ENCODE measurements at regions of chr19 and their contacts with region 1.

Region 1: GRCh38 chr19:52237771-52238400 is 31.5 kb upstream of the ZNF766 start:
- DNase-seq: peak; percentile 68
- H3K4me3 Mint-ChIP-seq: no peak overlapping the region
- H3K27ac Mint-ChIP-seq: no peak overlapping the region
- H3K4me1 Mint-ChIP-seq: no peaks in the 10 kb centered on the region
- H3K27me3 Mint-ChIP-seq: no peaks in the 10 kb centered on the region
- CTCF ChIP-seq: peak; percentile 72

Region 2: DNA sequence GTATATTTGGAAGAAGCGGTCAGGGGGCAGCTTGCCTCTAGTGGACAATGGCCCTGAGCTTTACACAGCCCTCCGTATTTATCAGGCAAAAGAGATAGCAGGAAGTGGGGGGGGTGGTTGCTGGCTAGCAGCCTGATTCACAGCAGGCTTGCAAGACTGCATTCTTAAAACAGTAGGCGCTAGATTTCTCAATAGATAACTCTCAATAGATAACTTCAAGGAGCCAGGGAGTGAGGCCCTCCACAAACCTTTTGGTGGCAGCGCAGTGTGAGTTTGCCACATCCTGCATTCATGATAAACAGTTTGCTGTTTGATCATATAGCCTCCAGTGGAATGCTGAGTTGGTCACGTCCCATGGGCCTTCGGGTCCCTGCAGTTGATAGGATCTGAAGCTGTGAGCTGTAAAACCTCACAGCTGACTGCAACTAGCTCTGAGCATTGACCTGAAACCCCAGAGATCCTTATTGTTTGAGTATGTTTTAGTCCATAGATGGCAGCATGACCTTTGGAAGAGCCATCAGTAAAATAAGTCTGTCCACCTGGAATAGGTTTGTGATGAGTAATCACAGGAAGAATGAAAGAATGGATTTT is 430.7 kb before region 1 on chr19:
- CTCF ChIA-PET with region 1: interaction called, 4 read pairs
- POLR2A ChIA-PET with region 1: no interaction called
- intact Hi-C with region 1: loop called (anchors 5 kb)
- DNase-seq: no peak
- H3K4me3 Mint-ChIP-seq: no peak overlapping the region
- H3K27ac Mint-ChIP-seq: no peak overlapping the region
- H3K4me1 Mint-ChIP-seq: peaks cover 29% of the 10 kb centered on the region
- H3K27me3 Mint-ChIP-seq: no peaks in the 10 kb centered on the region
- CTCF ChIP-seq: no peak

Region 3: GRCh38 chr19:51926784-51927742 is 310.8 kb before region 1 on chr19 and contains the start of gene ZNF613:
- CTCF ChIA-PET with region 1: no interaction called
- POLR2A ChIA-PET with region 1: no interaction called
- intact Hi-C with region 1: loop called (anchors 10 kb)
- DNase-seq: peak; percentile 95
- H3K4me3 Mint-ChIP-seq: peak within 1 kb of the TSS; percentile 91
- H3K27ac Mint-ChIP-seq: peak within 1 kb of the TSS; percentile 89
- H3K4me1 Mint-ChIP-seq: peaks cover 9% of the 10 kb centered on the region
- H3K27me3 Mint-ChIP-seq: no peaks in the 10 kb centered on the region
- CTCF ChIP-seq: no peak
- total RNA-seq, gene ZNF613: 4.9 and 7.7 TPM in 2 replicates

Region 4: DNA sequence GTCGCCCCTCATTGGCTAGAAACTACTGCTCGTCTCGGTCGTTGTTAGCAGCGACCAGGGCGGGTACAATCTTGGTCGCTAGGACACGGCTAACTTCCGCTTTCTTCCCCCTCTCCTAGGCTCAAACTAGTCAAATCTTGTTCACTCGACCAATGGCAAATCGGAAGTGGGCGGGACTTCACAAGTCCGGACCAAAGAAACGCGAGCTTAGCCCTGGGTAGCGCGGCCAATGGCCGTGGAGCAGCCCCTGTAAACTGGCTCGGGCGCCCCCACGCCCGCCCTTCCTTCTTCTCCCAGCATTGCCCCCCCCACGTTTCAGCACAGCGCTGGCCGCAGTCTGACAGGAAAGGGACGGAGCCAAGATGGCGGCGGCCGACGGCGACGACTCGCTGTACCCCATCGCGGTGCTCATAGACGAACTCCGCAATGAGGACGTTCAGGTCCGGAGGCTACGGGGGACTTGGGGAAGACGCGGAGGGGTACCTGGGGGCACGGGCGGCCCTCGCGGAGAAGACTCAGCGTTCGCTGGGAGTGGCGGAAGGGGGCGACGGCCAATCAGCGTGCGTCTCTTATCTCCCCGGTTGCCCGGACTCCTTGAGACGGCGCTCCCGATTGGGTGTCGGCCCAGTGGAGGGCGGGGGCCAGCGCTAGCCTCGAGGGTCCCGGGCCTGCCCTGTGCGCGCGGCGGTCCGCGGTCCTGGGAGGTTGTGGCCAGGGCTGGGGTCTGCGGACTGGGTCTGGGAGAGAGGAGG is 48.0 kb before region 1 on chr19 and contains the start of gene PPP2R1A:
- CTCF ChIA-PET with region 1: interaction called, 3 read pairs
- POLR2A ChIA-PET with region 1: interaction called, 8 read pairs
- intact Hi-C with region 1: loop called (anchors 1 kb)
- DNase-seq: peak; percentile 100
- H3K4me3 Mint-ChIP-seq: peak within 1 kb of the TSS; percentile 97
- H3K27ac Mint-ChIP-seq: peak within 1 kb of the TSS; percentile 100
- H3K4me1 Mint-ChIP-seq: peaks cover 27% of the 10 kb centered on the region
- H3K27me3 Mint-ChIP-seq: no peaks in the 10 kb centered on the region
- CTCF ChIP-seq: no peak
- total RNA-seq, gene PPP2R1A: 194 and 211 TPM in 2 replicates

Region 5: GRCh38 chr19:52200044-52200443 is 37.8 kb before region 1 on chr19:
- CTCF ChIA-PET with region 1: interaction called, 13 read pairs
- POLR2A ChIA-PET with region 1: interaction called, 6 read pairs
- intact Hi-C with region 1: no loop called
- DNase-seq: no peak
- H3K4me3 Mint-ChIP-seq: no peak overlapping the region
- H3K27ac Mint-ChIP-seq: peak overlapping the region; percentile 49
- H3K4me1 Mint-ChIP-seq: peaks cover 18% of the 10 kb centered on the region
- H3K27me3 Mint-ChIP-seq: no peaks in the 10 kb centered on the region
- CTCF ChIP-seq: no peak

Region 6: GRCh38 chr19:52296773-52297600 is 59.1 kb after region 1 on chr19 and contains the start of gene ZNF480:
- CTCF ChIA-PET with region 1: no interaction called
- POLR2A ChIA-PET with region 1: no interaction called
- intact Hi-C with region 1: no loop called
- DNase-seq: peak; percentile 69
- H3K4me3 Mint-ChIP-seq: peak within 1 kb of the TSS; percentile 90
- H3K27ac Mint-ChIP-seq: peak within 1 kb of the TSS; percentile 85
- H3K4me1 Mint-ChIP-seq: peaks cover 13% of the 10 kb centered on the region
- H3K27me3 Mint-ChIP-seq: no peaks in the 10 kb centered on the region
- CTCF ChIP-seq: no peak
- total RNA-seq, gene ZNF480: 13.1 and 15.8 TPM in 2 replicates

Region 7: DNA sequence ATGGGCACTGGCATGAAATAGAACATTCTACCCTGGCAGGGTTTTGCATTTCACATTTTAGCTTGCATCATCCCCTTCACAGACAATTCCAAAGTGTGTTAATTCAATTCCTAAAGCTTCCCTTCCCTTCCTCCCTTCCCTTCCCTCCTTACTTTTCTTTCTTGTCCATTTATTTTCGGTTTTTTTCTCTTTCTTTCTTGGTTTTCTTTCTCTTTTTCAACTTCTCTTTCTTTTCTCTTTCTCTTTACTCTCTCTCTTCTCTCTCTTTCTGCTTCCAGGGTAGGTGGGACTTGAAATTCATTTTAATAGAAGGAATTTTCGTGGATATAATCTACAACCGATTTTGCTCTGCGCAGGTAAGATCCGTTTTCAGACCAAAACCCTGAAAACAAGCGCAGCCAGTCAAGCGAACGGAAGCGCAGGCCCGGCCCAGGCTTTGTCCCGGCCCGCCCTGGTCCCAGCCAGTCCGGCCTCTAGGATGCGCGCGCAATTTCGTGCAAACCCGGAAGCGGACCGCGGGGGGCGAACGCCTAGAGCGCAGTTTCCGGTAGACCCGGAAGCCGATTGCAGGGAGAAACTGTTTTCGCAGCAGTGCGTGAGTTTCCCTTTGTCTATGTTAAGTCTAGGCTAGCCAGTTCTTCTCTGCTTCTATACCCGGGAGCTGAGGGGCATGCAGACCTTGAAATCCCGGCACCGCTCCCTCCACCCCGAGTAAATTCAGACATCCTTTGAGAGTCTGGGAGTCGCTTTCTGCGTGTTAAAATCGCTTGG is 159.6 kb after region 1 on chr19 and contains the start of gene ZNF528:
- CTCF ChIA-PET with region 1: no interaction called
- POLR2A ChIA-PET with region 1: no interaction called
- intact Hi-C with region 1: no loop called
- DNase-seq: peak; percentile 89
- H3K4me3 Mint-ChIP-seq: peak within 1 kb of the TSS; percentile 76
- H3K27ac Mint-ChIP-seq: peak within 1 kb of the TSS; percentile 94
- H3K4me1 Mint-ChIP-seq: peaks cover 6% of the 10 kb centered on the region
- H3K27me3 Mint-ChIP-seq: no peaks in the 10 kb centered on the region
- CTCF ChIP-seq: no peak
- total RNA-seq, gene ZNF528: 16.0 and 21.6 TPM in 2 replicates

Measured in MCF 10A (cell line).